Pancreas (tissue), 10 donors: ENCODE measurements at regions of chr16 and their contacts with region 1.

Region 1: GRCh38 chr16:48164907-48165726 is 9.3 kb upstream of the ABCC12 start:
- DNase-seq: peak; percentile 41 to 86 (median 74)
- ATAC-seq: peak; percentile 95 to 99 (median 96)
- H3K4me3 ChIP-seq: no peak overlapping the region
- H3K27ac ChIP-seq: no peak overlapping the region
- H3K4me1 ChIP-seq: no peaks in the 10 kb centered on the region
- H3K27me3 ChIP-seq: no peaks in the 10 kb centered on the region
- CTCF ChIP-seq: peak; percentile 62 to 75 (median 71)

Region 2: DNA sequence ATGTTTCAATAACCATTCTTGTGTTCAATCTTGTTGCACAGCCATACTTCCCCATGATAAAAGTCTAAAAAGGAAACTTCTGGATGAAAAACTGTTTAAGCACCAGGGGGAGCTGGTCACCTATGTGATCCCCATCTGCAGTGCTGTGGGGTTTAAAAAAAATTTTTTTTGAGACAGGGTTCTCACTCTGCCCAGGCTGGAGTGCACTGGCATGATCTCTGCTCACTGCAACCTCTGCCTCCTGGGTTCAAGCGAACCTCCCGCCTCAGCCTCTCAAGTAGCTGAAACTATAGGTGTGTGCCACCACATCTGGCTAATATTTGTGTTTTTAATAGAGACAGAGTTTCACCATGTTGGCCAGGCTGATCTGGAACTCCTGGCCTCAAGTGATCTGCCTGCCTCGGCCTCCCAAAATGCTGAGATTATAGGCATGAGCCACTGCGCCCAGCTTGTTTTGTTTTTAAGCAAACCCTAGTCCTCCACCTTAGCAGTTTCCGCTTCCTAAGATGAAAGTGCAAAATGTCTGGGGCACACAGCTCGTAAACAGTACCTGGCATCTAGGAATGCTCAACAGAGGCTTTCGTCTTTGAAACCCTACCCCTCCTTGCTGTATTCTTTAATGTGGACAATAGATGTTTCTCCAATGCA is 1217.1 kb before region 1 on chr16:
- intact Hi-C with region 1: loop called in 1 of 3 experiments (anchors 10 kb)
- DNase-seq: no peak
- ATAC-seq: peak; percentile 46 to 87 (median 86)
- H3K4me3 ChIP-seq: no peak overlapping the region
- H3K27ac ChIP-seq: no peak overlapping the region
- H3K4me1 ChIP-seq: no peaks in the 10 kb centered on the region
- H3K27me3 ChIP-seq: no peaks in the 10 kb centered on the region
- CTCF ChIP-seq: peak in 2 of 4 donors; percentile 18 to 24

Region 3: DNA sequence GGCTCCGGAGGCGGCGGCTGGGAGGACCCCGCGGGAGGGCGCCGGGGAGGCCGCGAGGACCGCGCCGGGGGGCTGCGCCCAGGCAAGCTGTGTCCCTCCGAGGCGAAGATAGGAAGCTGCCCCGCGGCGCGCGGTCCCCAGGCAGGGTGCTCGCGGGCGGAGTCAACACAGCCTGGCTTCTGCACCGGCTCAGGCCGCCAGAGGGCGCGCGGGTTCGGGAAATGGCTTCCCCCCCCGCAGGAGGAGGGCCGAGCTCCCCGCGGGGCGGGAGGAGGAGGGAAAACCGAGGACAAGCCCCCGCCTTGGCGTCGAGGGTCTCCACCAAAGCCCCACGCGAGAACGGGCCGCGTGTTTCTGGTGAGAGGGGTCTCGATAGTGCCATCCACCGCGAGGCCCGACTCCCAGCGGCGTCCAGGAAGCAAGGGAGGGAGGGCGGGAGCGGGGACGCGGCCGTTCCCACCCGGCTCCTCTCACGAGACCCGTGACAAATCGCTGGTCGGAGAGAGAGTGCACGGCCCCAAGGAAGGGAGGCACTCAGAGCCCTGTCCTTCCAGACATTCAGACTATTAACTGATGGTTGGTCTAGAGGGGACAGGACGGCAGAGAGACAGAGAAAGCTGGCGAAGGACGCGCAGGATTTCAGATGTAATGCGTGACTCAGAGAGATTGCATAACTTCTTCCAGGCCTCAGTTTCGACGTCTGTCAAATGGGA is 1127.2 kb before region 1 on chr16:
- intact Hi-C with region 1: loop called in 2 of 3 experiments (anchors 5 to 10 kb)
- DNase-seq: peak; percentile 75 to 99 (median 88)
- ATAC-seq: peak; percentile 99 to 100 (median 100)
- H3K4me3 ChIP-seq: peak overlapping the region; percentile 29 to 59 (median 54)
- H3K27ac ChIP-seq: no peak overlapping the region
- H3K4me1 ChIP-seq: no peaks in the 10 kb centered on the region
- H3K27me3 ChIP-seq: no peaks in the 10 kb centered on the region
- CTCF ChIP-seq: peak; percentile 76 to 93 (median 90)

Region 4: DNA sequence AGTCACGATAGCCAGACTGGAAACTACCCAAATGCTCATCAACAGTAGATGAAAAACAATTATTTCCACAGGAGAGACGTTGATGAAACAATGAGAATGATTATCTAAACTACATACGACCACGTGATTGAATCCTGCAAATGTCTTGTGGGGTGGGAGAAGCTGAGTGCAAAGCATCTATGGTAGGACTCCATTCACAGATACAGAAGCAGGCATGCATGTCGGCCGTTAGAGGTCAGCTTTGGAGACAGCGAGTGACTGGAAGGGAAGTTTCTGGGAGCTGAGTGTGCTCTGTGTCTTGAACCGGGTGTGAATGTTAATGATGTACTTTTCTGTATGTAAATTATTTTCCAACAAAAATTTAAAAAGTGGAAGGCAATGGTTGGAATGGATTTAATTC is 1120.1 kb before region 1 on chr16:
- intact Hi-C with region 1: loop called in 1 of 3 experiments (anchors 10 kb)
- DNase-seq: no peak
- ATAC-seq: no peak
- H3K4me3 ChIP-seq: no peak overlapping the region
- H3K27ac ChIP-seq: no peak overlapping the region
- H3K4me1 ChIP-seq: no peaks in the 10 kb centered on the region
- H3K27me3 ChIP-seq: no peaks in the 10 kb centered on the region
- CTCF ChIP-seq: no peak

Region 5: GRCh38 chr16:47979164-47979520 is 186.0 kb before region 1 on chr16:
- intact Hi-C with region 1: no loop called
- DNase-seq: no peak
- ATAC-seq: peak in 1 of 4 donors; percentile 62
- H3K4me3 ChIP-seq: no peak overlapping the region
- H3K27ac ChIP-seq: no peak overlapping the region
- H3K4me1 ChIP-seq: no peaks in the 10 kb centered on the region
- H3K27me3 ChIP-seq: no peaks in the 10 kb centered on the region
- CTCF ChIP-seq: no peak

Region 6: DNA sequence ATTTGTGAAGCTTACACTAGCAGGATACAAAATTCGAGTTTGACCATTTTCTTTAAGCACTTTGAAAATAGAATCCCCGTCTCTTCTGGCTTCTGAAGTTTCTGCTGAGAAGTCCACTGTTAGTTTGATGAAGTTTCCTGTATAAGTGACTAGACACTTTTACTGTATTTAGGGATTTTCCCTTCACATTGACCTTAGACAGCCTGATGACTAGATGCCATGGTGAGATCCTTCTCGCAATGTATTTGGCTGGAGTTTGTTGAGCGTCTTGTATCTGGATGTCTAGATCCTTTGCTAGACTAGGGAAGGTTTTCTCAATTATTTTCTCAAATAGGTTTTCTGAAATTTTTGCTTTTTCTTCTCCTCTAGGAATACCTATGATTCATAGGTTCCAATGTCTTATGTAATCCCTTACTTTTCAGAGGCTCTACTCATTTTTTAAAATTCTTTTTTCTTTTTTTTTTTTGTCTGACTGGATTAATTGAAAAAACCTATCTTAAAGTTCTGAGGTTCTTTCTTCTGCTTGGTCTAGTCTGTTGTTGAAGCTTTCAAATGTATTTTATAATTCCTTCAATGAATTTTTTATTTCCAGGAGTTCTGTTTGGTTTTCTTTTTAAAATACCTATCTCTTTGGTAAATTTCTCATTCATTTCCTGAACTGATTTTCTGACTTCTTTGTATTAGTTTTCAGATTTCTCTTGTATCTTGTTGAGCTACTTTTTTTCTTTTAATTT is 146.0 kb after region 1 on chr16:
- intact Hi-C with region 1: no loop called
- DNase-seq: no peak
- ATAC-seq: no peak
- H3K4me3 ChIP-seq: no peak overlapping the region
- H3K27ac ChIP-seq: no peak overlapping the region
- H3K4me1 ChIP-seq: no peaks in the 10 kb centered on the region
- H3K27me3 ChIP-seq: no peaks in the 10 kb centered on the region
- CTCF ChIP-seq: no peak